ENCODE measurements at regions of chr5 and their contacts with region 1.

Region 1: DNA sequence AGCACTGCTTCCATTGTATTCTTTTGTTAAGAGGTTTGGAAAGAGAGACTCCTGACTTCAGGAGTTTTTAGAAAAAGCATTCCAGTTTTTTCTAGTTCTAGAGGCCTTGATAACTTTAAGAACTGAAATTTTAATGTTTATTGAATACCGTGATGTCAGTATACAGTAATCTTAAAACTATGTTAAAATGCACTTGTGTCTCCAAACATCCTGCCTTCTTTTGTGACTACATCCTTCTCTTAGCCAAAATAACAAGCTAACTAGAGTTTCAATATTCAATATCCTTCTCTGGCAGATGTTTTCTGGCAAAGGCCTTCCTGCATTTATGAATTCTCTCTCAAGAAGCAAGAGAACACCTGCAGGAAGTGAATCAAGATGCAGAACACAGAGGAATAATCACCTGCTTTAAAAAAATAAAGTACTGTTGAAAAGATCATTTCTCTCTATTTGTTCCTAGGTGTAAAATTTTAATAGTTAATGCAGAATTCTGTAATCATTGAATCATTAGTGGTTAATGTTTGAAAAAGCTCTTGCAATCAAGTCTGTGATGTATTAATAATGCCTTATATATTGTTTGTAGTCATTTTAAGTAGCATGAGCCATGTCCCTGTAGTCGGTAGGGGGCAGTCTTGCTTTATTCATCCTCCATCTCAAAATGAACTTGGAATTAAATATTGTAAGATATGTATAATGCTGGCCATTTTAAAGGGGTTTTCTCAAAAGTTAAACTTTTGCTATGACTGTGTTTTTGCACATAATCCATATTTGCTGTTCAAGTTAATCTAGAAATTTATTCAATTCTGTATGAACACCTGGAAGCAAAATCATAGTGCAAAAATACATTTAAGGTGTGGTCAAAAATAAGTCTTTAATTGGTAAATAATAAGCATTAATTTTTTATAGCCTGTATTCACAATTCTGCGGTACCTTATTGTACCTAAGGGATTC is 43.1 kb downstream of the NDFIP1 start:
- DNase-seq: peak; percentile 63
- ATAC-seq: peak; percentile 87
- H3K4me3 ChIP-seq: no peak overlapping the region
- H3K27ac ChIP-seq: no peak overlapping the region
- H3K4me1 ChIP-seq: peaks cover 2 to 10% of the 10 kb centered on the region in 2 experiments; a peak in 2 of 4 replicates
- H3K27me3 ChIP-seq: no peaks in the 10 kb centered on the region
- CTCF ChIP-seq: peak; percentile 79 to 93 (median 90)
- POLR2A ChIP-seq: no peak
- RAD21 ChIP-seq: peak; percentile 92

Region 2: DNA sequence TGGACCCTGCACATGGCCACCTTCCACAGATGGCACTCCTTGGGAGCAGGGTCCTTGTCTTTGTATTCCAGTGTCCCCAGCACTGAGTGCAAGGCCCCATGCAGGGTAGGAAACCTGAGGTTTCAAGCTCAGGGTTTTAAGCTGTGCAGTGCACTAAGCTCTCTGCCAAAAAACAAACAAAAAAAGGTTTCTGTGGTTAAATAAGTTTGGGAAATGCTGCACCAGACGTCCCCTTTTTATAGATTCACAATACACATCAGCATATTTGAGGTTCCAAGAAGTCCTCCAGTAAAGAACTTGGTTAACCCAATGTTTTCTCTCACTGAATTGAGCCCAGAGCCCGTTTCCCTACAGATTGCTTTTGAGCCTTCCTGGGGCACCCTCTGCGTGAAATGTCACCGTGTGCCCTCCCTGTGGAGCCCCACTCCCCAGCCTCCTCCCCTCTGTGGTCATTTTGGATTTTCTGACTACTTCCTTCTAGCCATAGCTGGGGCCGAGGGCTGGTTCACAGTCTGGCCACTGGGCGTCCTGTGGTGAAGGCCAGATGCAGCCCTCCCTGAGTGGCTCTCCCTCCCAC is 210.9 kb before region 1 on chr5:
- CTCF ChIA-PET with region 1: no interaction called
- POLR2A ChIA-PET with region 1: no interaction called
- RAD21 ChIA-PET with region 1: no interaction called
- intact Hi-C with region 1: no loop called
- DNase-seq: no peak
- ATAC-seq: peak; percentile 76
- H3K4me3 ChIP-seq: peak overlapping the region in 1 of 2 experiments; percentile 6; a peak in 1 of 4 replicates
- H3K27ac ChIP-seq: peak overlapping the region; percentile 53
- H3K4me1 ChIP-seq: peaks cover 5 to 17% of the 10 kb centered on the region in 2 experiments; a peak in 3 of 4 replicates
- H3K27me3 ChIP-seq: no peaks in the 10 kb centered on the region
- CTCF ChIP-seq: peak in 2 of 3 experiments; percentile 17; a peak in 1 of 6 replicates
- POLR2A ChIP-seq: no peak
- RAD21 ChIP-seq: no peak

Region 3: GRCh38 chr5:142306077-142306502 is 154.4 kb after region 1 on chr5:
- CTCF ChIA-PET with region 1: no interaction called
- POLR2A ChIA-PET with region 1: no interaction called
- RAD21 ChIA-PET with region 1: no interaction called
- intact Hi-C with region 1: loop called (anchors 5 kb)
- DNase-seq: no peak
- ATAC-seq: no peak
- H3K4me3 ChIP-seq: no peak overlapping the region
- H3K27ac ChIP-seq: no peak overlapping the region
- H3K4me1 ChIP-seq: peaks cover 9 to 35% of the 10 kb centered on the region in 2 experiments; a peak in 3 of 4 replicates
- H3K27me3 ChIP-seq: no peaks in the 10 kb centered on the region
- CTCF ChIP-seq: no peak
- POLR2A ChIP-seq: no peak
- RAD21 ChIP-seq: no peak

Region 4: DNA sequence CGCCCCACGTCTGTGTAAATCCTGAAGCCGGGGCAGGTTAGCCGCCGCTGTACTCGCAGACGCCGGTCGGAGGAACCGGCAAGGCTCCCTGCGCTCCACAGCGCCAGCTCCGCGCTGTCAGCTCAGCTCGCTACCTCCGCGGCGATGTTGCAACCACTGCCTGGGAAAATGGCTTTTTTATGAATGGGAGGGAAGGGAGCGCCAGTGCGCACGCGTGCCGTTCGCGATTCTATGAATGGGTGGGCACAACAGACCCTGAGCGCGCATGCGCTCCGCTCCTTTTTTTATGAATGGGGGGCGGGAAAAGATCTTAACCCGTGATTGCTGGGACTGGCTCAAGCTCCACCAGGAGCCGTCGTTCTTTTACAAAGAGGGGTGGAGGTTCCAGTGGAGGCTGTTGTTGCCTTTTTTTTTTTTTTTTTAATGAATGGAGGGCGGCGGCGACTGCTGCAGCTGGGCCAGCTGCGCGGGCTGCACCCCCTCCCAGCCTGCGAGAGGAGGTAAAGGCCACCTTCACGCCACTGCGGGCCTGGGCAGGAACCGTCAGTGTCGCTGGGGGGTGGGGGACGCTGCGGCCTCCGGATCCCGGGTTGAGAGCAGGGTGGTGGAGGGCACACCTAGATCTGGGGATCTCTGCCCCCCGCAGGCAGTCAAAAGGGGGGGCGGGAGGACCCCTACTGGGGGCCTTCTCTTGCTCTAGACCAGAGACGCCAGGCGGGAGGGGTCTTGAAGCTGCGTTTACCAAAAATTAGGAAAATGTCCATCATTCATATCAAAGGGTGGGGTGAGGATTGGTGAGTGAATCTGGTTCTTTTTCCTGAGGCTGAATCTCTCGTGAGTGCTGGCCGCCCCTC is 173.4 kb after region 1 on chr5 and contains the start of gene SPRY4:
- CTCF ChIA-PET with region 1: interaction called, 6 read pairs
- POLR2A ChIA-PET with region 1: no interaction called
- RAD21 ChIA-PET with region 1: no interaction called
- intact Hi-C with region 1: loop called (anchors 5 kb)
- DNase-seq: peak; percentile 95
- ATAC-seq: peak; percentile 51
- H3K4me3 ChIP-seq: peak within 1 kb of the TSS; percentile 78 to 98
- H3K27ac ChIP-seq: peak within 1 kb of the TSS; percentile 98
- H3K4me1 ChIP-seq: peaks cover 61 to 72% of the 10 kb centered on the region in 2 experiments
- H3K27me3 ChIP-seq: no peaks in the 10 kb centered on the region
- CTCF ChIP-seq: 0 out of 6 replicates have a peak, but pooled peaks of 1 of the 3 experiments have one; percentile 5
- POLR2A ChIP-seq: peak; percentile 98
- RAD21 ChIP-seq: no peak
- total RNA-seq, gene SPRY4: 112 TPM

Region 5: GRCh38 chr5:142356716-142357473 is 205.2 kb after region 1 on chr5:
- CTCF ChIA-PET with region 1: no interaction called
- POLR2A ChIA-PET with region 1: interaction called, 3 read pairs
- RAD21 ChIA-PET with region 1: no interaction called
- intact Hi-C with region 1: loop called (anchors 2 kb)
- DNase-seq: peak; percentile 87
- ATAC-seq: peak; percentile 67
- H3K4me3 ChIP-seq: peak overlapping the region; percentile 43 to 59
- H3K27ac ChIP-seq: peak overlapping the region; percentile 99
- H3K4me1 ChIP-seq: peaks cover 72 to 86% of the 10 kb centered on the region in 2 experiments
- H3K27me3 ChIP-seq: no peaks in the 10 kb centered on the region
- CTCF ChIP-seq: no peak
- POLR2A ChIP-seq: no peak
- RAD21 ChIP-seq: no peak

Region 6: DNA sequence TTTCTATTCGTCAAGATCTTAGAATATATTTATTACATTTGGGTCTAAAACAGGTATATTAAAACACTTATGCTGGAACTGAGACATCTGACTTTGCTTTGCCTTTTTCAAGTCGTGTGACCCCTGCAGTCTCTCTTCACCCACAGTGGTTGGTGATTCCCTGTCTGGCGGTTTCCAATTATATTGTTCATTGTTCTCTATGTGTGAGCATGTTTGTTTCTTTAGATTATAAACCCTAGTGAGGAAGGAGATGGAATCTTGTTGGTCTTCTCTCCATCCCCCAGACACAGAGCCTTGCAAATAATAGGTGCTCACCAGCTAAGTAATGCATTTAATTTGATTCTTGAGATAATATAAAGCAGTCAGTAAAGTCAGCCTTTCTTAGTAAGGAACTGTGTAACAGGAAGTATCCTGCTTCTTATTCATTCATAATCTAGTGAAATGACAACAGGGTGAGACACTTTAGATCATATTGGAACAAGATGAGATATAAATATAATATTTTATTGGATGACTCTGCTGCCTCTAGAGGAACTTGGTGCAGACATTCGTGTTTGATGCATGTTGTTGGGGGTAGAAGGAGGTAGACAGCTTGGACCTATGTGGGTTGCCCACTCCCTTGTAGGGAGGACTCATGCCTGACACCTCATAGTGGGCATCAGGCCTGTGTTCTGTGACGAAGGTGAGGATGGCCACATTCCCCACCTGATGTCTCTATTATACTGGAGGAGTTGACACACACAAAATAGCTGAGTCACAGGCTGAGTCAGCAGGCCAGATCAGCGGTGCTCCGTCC is 446.0 kb after region 1 on chr5:
- CTCF ChIA-PET with region 1: interaction called, 4 read pairs
- POLR2A ChIA-PET with region 1: interaction called, 5 read pairs
- RAD21 ChIA-PET with region 1: no interaction called
- intact Hi-C with region 1: loop called (anchors 5 kb)
- DNase-seq: peak; percentile 74
- ATAC-seq: peak; percentile 86
- H3K4me3 ChIP-seq: no peak overlapping the region
- H3K27ac ChIP-seq: peak overlapping the region; percentile 31; the same call in 1 of the 2 replicates
- H3K4me1 ChIP-seq: peaks cover 15 to 43% of the 10 kb centered on the region in 2 experiments
- H3K27me3 ChIP-seq: no peaks in the 10 kb centered on the region
- CTCF ChIP-seq: peak in 2 of 3 experiments; percentile 11 to 39; a peak in 2 of 6 replicates
- POLR2A ChIP-seq: no peak
- RAD21 ChIP-seq: 0 out of 2 replicates have a peak, but pooled peaks have one; percentile 31

Region 7: GRCh38 chr5:142699184-142699720 is 547.5 kb after region 1 on chr5:
- CTCF ChIA-PET with region 1: interaction called, 5 read pairs
- POLR2A ChIA-PET with region 1: no interaction called
- RAD21 ChIA-PET with region 1: interaction called in 1 of 2 experiments, 3 read pairs
- intact Hi-C with region 1: loop called (anchors 1 kb)
- DNase-seq: peak; percentile 66
- ATAC-seq: peak; percentile 98
- H3K4me3 ChIP-seq: no peak overlapping the region
- H3K27ac ChIP-seq: no peak overlapping the region
- H3K4me1 ChIP-seq: peaks cover 11 to 14% of the 10 kb centered on the region in 2 experiments; a peak in 3 of 4 replicates
- H3K27me3 ChIP-seq: no peaks in the 10 kb centered on the region
- CTCF ChIP-seq: peak; percentile 94 to 97 (median 97)
- POLR2A ChIP-seq: no peak
- RAD21 ChIP-seq: peak; percentile 100

Region 8: DNA sequence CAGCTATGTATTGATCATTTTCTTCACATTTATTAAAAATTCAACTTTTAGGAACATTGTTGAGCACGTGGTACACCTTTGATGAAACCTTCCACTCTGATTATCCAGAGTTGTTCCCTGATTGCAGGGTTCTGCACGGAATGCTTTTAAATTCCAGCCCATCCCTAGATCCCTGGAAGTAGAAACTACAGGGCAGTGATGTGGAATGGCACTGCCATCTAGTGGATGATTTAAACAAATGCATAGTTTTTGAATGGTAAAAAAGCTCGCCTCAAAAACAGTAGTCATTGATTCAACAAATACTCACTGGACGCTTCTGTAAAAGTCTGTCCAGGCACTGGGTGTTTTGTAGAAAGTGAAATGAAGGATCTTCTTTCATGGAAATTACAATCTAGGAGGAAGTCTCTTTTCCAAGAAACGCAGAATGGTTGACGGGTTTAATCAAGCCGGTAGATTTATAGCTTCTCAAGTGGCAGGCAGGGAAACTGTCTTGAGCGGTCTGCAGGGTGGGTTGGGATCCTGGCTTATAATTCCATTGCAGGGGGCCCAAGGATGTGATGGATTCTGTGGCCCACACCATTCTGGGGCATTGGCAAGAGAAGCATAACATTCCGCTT is 736.9 kb after region 1 on chr5:
- CTCF ChIA-PET with region 1: no interaction called
- POLR2A ChIA-PET with region 1: no interaction called
- RAD21 ChIA-PET with region 1: no interaction called
- intact Hi-C with region 1: loop called (anchors 10 kb)
- DNase-seq: no peak
- ATAC-seq: peak; percentile 78
- H3K4me3 ChIP-seq: no peak overlapping the region
- H3K27ac ChIP-seq: no peak overlapping the region
- H3K4me1 ChIP-seq: peaks cover 6 to 10% of the 10 kb centered on the region in 2 experiments; a peak in 1 of 4 replicates
- H3K27me3 ChIP-seq: no peaks in the 10 kb centered on the region
- CTCF ChIP-seq: peak; percentile 59 to 84 (median 80)
- POLR2A ChIP-seq: no peak
- RAD21 ChIP-seq: peak; percentile 82

Measured in HCT116 (cell line).